Activated CD4-positive, alpha-beta memory T cell treated with anti-CD3 and anti-CD28 coated beads for 36 hours (primary cell): ENCODE measurements at regions of chr22 and their contacts with region 1.

Region 1: DNA sequence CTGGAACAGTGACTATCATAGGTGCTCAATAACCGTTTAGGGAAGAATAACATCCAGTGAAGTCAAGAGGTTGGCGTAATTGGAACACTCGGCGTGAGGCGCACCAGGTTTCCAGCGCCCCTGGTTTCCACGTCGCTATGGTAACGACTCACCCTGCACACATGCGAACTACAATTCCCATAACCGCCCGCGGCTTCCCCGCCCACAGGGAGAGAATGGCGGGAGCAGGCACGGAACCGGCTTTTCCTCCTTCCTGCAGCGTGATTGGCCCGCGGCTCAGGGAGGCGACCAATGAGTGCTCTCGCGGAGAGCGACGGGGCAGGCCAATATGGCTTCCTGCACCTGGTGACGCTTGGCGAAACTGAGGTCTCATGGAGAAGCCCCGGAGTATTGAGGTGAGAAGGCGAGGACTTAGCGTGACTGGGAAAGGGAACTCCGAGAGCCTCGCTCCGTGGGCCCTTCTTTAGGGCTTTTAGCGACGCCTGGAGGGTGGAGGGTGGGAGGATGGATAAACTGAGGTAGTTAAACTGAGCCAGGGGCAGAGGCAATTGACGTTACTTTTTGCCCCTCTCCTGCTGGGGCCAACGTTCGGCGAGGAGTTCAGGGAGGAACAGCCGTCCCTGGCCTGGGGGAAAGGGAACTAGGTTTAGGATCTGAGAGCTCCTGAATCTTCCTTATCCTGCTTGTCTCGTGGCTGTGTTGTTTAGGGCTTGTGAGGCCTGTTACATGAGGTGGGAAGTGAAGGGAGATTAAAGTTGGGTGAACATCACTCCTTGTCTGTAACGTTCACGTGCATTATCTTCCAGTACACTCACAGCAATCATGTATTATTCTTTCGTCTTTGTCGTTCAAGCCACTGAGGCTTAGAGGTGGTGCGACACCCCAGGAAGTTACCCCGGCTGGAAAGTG is at the start of gene L3MBTL2:
- DNase-seq: peak; percentile 99
- H3K4me3 Mint-ChIP-seq: peak within 1 kb of the TSS; percentile 95
- H3K27ac Mint-ChIP-seq: peak within 1 kb of the TSS; percentile 92
- H3K4me1 Mint-ChIP-seq: peaks cover 26% of the 10 kb centered on the region
- H3K27me3 Mint-ChIP-seq: no peaks in the 10 kb centered on the region
- total RNA-seq, gene L3MBTL2: 27.3 to 31.0 TPM

Region 2: DNA sequence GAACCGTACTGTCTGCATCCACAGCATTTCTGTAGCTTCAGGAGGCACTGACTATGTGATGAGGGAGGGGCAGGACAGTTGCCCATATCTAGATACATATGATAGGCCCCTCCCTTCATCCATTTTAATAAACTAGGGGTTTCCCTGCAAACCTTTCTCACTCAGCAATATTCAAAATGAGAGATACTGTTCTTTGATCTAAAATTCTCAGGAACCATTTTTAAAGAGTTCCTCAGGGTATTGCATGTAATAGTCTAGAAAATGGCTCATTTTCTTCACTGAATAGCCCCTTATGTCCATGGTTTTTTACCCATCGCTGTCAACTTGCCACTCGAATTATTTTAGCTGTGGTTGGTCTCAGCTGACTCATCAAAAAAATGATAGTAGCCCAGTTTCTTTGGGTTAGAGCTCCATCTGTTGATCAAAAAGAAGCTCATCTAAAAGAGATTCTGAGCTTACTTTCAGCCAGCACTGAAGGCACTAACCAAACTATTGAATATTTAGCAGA is 306.3 kb before region 1 on chr22:
- CTCF ChIA-PET with region 1: no interaction called
- POLR2A ChIA-PET with region 1: no interaction called
- intact Hi-C with region 1: no loop called
- DNase-seq: peak; percentile 41
- H3K4me3 Mint-ChIP-seq: peak overlapping the region; percentile 20
- H3K27ac Mint-ChIP-seq: peak overlapping the region; percentile 88
- H3K4me1 Mint-ChIP-seq: peaks cover 14% of the 10 kb centered on the region
- H3K27me3 Mint-ChIP-seq: no peaks in the 10 kb centered on the region

Region 3: DNA sequence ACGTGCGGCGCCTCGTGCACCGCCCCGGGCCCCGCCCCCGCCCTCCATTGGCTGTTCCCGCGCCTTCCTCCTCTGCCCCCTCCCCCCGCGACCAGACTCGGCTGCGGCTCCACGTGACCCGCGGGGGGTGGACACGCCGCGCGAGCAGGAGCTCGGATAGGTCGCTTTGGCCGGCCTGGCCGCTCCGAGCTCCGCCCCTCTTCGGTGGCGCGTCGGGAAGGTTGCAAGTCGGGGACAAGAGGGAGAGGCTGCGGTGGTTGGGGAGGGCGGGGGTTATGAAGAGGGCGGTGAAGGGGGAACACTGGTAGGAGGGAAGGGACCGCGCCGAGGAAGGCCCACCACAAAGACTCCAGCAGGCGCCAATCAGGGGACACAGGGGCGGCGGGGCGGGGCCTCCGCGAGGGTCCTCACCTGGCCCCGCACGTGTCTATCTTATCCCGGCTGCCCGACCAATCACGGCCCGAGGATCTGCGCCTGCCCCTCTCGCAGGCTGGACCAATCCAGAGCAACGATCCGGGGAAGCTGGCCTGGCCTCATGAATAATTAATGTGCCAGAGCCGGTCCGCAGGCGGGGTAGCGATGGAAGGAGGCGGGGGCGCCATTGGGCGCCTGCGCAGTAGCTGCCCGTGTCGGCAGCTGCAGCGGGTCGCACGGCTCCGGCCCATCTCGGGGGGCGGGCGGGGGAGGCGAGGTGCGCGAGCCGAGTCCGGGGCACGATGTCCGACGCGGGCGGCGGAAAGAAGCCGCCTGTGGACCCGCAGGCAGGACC is 176.3 kb after region 1 on chr22 and contains the start of gene TEF:
- CTCF ChIA-PET with region 1: no interaction called
- POLR2A ChIA-PET with region 1: no interaction called
- intact Hi-C with region 1: loop called (anchors 5 kb)
- DNase-seq: peak; percentile 98
- H3K4me3 Mint-ChIP-seq: peak within 1 kb of the TSS; percentile 81
- H3K27ac Mint-ChIP-seq: peak within 1 kb of the TSS; percentile 86
- H3K4me1 Mint-ChIP-seq: peaks cover 15% of the 10 kb centered on the region
- H3K27me3 Mint-ChIP-seq: no peaks in the 10 kb centered on the region
- total RNA-seq, gene TEF: 1.4 to 1.6 TPM